Prostate gland (tissue), 2 donors: ENCODE measurements at regions of chr15 and their contacts with region 1.

Region 1: GRCh38 chr15:99452774-99453636 is 112.8 kb upstream of the MEF2A start:
- DNase-seq: no peak
- H3K4me3 ChIP-seq: no peak overlapping the region
- H3K27ac ChIP-seq: peak overlapping the region in 1 of 2 donors; percentile 33
- H3K4me1 ChIP-seq: peaks cover 6% of the 10 kb centered on the region
- H3K27me3 ChIP-seq: no peaks in the 10 kb centered on the region
- CTCF ChIP-seq: no peak
- POLR2A ChIP-seq: no peak

Region 2: DNA sequence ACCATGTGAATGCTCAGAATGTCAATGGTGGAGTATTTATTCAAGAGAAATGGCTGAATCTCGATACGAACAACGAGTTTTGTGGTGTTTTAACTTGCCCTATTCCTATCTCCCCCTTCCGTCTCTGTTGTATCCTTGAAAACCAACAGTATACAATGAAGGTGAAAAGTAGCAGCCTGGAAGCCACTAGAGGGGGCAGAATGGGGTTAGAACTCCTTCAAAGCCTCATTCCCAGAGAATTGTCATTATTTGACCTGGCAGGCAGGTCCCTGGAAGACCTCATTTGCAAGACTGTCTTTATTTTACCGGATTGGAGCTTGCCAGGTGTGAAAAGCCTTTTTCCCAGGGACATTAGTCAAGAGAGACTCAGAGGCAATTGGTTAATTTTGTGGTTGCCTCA is 62.3 kb before region 1 on chr15:
- intact Hi-C with region 1: no loop called
- DNase-seq: no peak
- H3K4me3 ChIP-seq: no peak overlapping the region
- H3K27ac ChIP-seq: no peak overlapping the region
- H3K4me1 ChIP-seq: no peaks in the 10 kb centered on the region
- H3K27me3 ChIP-seq: no peaks in the 10 kb centered on the region
- CTCF ChIP-seq: no peak
- POLR2A ChIP-seq: no peak

Region 3: GRCh38 chr15:99486371-99487336 is 33.6 kb after region 1 on chr15:
- intact Hi-C with region 1: loop called (anchors 5 kb)
- DNase-seq: peak; percentile 80
- H3K4me3 ChIP-seq: peak overlapping the region; percentile 17 to 22
- H3K27ac ChIP-seq: peak overlapping the region in 1 of 2 donors; percentile 16
- H3K4me1 ChIP-seq: peaks cover 5% of the 10 kb centered on the region
- H3K27me3 ChIP-seq: no peaks in the 10 kb centered on the region
- CTCF ChIP-seq: no peak
- POLR2A ChIP-seq: no peak

Region 4: GRCh38 chr15:99507504-99508310 is 54.7 kb after region 1 on chr15:
- intact Hi-C with region 1: loop called (anchors 5 kb)
- DNase-seq: peak; percentile 25
- H3K4me3 ChIP-seq: no peak overlapping the region
- H3K27ac ChIP-seq: peak overlapping the region; percentile 26 to 56
- H3K4me1 ChIP-seq: no peaks in the 10 kb centered on the region
- H3K27me3 ChIP-seq: no peaks in the 10 kb centered on the region
- CTCF ChIP-seq: no peak
- POLR2A ChIP-seq: no peak